Activated naive CD4-positive, alpha-beta T cell treated with anti-CD3 and anti-CD28 coated beads for 36 hours (primary cell): ENCODE measurements at regions of chr4 and their contacts with region 1.

Region 1: GRCh38 chr4:10116580-10117358 is at the start of gene WDR1:
- DNase-seq: peak; percentile 90
- H3K4me3 Mint-ChIP-seq: peak within 1 kb of the TSS; percentile 93
- H3K27ac Mint-ChIP-seq: peak within 1 kb of the TSS; percentile 100
- H3K4me1 Mint-ChIP-seq: peaks cover 80% of the 10 kb centered on the region
- H3K27me3 Mint-ChIP-seq: no peaks in the 10 kb centered on the region
- total RNA-seq, gene WDR1: 271 to 295 TPM

Region 2: GRCh38 chr4:9691238-9692065 is 425.3 kb before region 1 on chr4:
- CTCF ChIA-PET with region 1: no interaction called
- intact Hi-C with region 1: loop called (anchors 1 kb)
- DNase-seq: peak; percentile 93
- H3K4me3 Mint-ChIP-seq: peak overlapping the region; percentile 82
- H3K27ac Mint-ChIP-seq: peak overlapping the region; percentile 77
- H3K4me1 Mint-ChIP-seq: peaks cover 24% of the 10 kb centered on the region
- H3K27me3 Mint-ChIP-seq: no peaks in the 10 kb centered on the region

Region 3: GRCh38 chr4:10096201-10096977 is 20.4 kb before region 1 on chr4:
- CTCF ChIA-PET with region 1: interaction called, 8 read pairs
- intact Hi-C with region 1: loop called (anchors 1 kb)
- DNase-seq: peak; percentile 90
- H3K4me3 Mint-ChIP-seq: no peak overlapping the region
- H3K27ac Mint-ChIP-seq: peak overlapping the region; percentile 81
- H3K4me1 Mint-ChIP-seq: peaks cover 91% of the 10 kb centered on the region
- H3K27me3 Mint-ChIP-seq: no peaks in the 10 kb centered on the region

Region 4: GRCh38 chr4:10129196-10130177 is 12.7 kb after region 1 on chr4:
- CTCF ChIA-PET with region 1: interaction called, 11 read pairs
- intact Hi-C with region 1: no loop called
- DNase-seq: no peak
- H3K4me3 Mint-ChIP-seq: no peak overlapping the region
- H3K27ac Mint-ChIP-seq: no peak overlapping the region
- H3K4me1 Mint-ChIP-seq: peaks cover 10% of the 10 kb centered on the region
- H3K27me3 Mint-ChIP-seq: no peaks in the 10 kb centered on the region

Region 5: DNA sequence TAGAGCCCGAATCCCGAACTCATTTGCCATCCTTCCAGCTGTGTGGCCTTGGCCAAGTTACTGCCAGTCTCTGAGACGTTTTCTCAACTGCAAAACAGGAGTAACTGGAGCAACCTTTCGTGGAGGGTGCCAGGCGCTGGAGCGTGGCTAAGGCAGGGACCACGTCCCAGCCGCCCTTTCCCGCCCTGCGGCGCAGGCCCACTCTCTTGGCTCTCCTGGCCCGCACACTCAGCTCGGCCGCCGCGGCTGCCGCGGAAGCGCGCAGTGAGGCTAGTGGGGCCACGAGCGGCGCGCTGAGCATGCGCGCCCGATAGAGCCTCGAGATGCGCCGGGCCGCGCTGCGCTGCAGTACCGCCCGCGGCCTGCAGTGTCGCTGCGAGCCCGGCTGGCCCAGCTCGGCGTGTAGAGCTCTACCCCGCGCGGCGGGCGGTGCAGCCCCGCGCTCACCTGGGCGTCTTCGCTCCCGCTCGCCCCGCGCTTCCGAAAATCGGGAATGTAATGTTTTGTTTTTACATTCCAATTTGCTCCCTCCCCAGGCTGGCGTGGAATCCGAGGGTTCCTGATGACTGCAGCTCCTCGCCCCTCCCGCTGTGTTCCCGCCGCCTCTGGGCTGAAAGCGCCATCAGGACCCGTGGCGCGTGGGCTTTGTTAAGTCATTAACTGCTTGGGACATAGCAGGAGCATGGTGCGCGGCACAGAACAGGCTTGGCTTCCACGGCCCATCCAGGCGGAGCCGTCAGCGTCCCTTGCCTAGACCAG is 344.5 kb after region 1 on chr4:
- CTCF ChIA-PET with region 1: interaction called, 6 read pairs
- intact Hi-C with region 1: loop called (anchors 1 kb)
- DNase-seq: peak; percentile 65
- H3K4me3 Mint-ChIP-seq: peak overlapping the region; percentile 76
- H3K27ac Mint-ChIP-seq: no peak overlapping the region
- H3K4me1 Mint-ChIP-seq: peaks cover 25% of the 10 kb centered on the region
- H3K27me3 Mint-ChIP-seq: peaks cover 32% of the 10 kb centered on the region